ENCODE measurements at regions of chr2 and their contacts with region 1.

Region 1: GRCh38 chr2:20446917-20447436 is at the start of gene RHOB:
- DNase-seq: peak; percentile 74
- ATAC-seq: peak; percentile 98
- H3K4me3 ChIP-seq: peak within 1 kb of the TSS; percentile 60; the same call in 1 of the 2 replicates
- H3K27ac ChIP-seq: no peak within 1 kb of the TSS
- H3K4me1 ChIP-seq: peaks cover 3% of the 10 kb centered on the region
- H3K27me3 ChIP-seq: peaks cover 5 to 9% of the 10 kb centered on the region in 2 experiments; a peak in 3 of 4 replicates
- CTCF ChIP-seq: no peak
- EP300 ChIP-seq: no peak
- POLR2A ChIP-seq: peak; percentile 98
- RAD21 ChIP-seq: 0 out of 2 replicates have a peak, but pooled peaks have one; percentile 11
- polyA plus RNA-seq, gene RHOB: 0.03 to 0.35 TPM

Region 2: GRCh38 chr2:20424300-20425290 is 22.4 kb before region 1 on chr2:
- CTCF ChIA-PET with region 1: interaction called, 7 read pairs
- POLR2A ChIA-PET with region 1: interaction called, 4 read pairs
- RAD21 ChIA-PET with region 1: interaction called, 17 read pairs
- SMC1A ChIA-PET with region 1: interaction called, 5 read pairs
- in situ Hi-C with region 1: no loop called
- intact Hi-C with region 1: no loop called
- DNase-seq: peak; percentile 57
- ATAC-seq: peak; percentile 76
- H3K4me3 ChIP-seq: peak overlapping the region; percentile 17; the same call in 1 of the 2 replicates
- H3K27ac ChIP-seq: peak overlapping the region; percentile 68
- H3K4me1 ChIP-seq: peaks cover 34% of the 10 kb centered on the region
- H3K27me3 ChIP-seq: no peaks in the 10 kb centered on the region
- CTCF ChIP-seq: no peak
- EP300 ChIP-seq: no peak
- POLR2A ChIP-seq: 0 out of 2 replicates have a peak, but pooled peaks have one; percentile 32
- RAD21 ChIP-seq: no peak

Region 3: DNA sequence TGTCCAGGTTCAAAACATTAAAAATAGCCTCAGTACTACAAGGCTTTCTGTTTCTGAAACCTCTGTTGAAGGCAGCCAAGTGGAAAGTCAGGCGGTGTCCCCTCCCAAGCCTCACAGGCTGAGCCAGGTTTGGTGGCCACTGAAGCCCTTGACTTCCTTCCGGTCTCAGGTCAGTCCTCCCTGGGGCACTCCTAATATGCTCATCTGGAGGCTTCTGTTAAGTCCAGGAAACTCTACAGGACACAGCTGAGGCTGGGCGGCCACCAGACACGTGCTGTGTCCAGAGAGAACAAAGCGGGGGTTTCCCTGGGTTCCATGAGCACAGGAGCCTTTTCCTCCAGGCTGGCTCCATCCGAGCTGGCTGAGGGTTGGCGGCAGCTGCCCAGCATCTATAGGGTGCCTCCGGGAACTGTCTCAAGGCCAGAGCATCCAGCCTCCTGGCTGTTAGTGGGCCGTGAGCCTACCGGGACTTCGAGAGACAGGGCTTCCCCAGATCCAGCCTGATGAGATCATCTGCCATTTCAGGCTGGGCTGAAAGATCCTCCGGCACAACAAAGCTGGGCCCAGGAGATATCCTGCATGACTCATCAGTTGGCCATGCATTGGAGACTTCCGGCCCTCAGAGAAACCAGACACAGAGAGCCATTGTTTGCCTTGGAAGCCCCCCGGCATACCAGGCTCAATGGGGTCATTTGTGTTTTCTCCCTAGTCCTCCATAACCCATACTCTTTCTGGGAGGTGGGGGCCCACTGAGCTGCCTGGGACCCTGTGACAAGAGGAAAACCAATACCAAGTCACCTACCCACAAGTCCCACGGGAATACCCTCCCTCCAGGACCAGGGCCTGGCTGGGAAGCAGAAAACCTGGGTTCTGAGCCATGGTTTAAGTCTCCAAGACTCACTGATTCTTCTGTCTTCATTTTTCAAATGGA is 132.2 kb after region 1 on chr2:
- CTCF ChIA-PET with region 1: interaction called, 7 read pairs
- POLR2A ChIA-PET with region 1: interaction called, 6 read pairs
- RAD21 ChIA-PET with region 1: interaction called, 10 read pairs
- SMC1A ChIA-PET with region 1: interaction called, 4 read pairs
- in situ Hi-C with region 1: no loop called
- intact Hi-C with region 1: loop called (anchors 2 kb)
- DNase-seq: peak; percentile 74
- ATAC-seq: peak; percentile 86
- H3K4me3 ChIP-seq: peak overlapping the region; percentile 49; the same call in 1 of the 2 replicates
- H3K27ac ChIP-seq: peak overlapping the region; percentile 86
- H3K4me1 ChIP-seq: peaks cover 46% of the 10 kb centered on the region
- H3K27me3 ChIP-seq: no peaks in the 10 kb centered on the region
- CTCF ChIP-seq: no peak
- EP300 ChIP-seq: 0 out of 4 replicates have a peak, but pooled peaks of 1 of the 2 experiments have one; percentile 46
- POLR2A ChIP-seq: no peak
- RAD21 ChIP-seq: 0 out of 2 replicates have a peak, but pooled peaks have one; percentile 2

Region 4: GRCh38 chr2:20635675-20636584 is 189.0 kb after region 1 on chr2:
- CTCF ChIA-PET with region 1: interaction called, 119 read pairs
- POLR2A ChIA-PET with region 1: interaction called, 13 read pairs
- RAD21 ChIA-PET with region 1: interaction called, 107 read pairs
- SMC1A ChIA-PET with region 1: interaction called, 56 read pairs
- in situ Hi-C with region 1: loop called (anchors 5 kb)
- intact Hi-C with region 1: loop called (anchors 1 kb)
- DNase-seq: no peak
- ATAC-seq: peak; percentile 95
- H3K4me3 ChIP-seq: no peak overlapping the region
- H3K27ac ChIP-seq: no peak overlapping the region
- H3K4me1 ChIP-seq: peaks cover 17% of the 10 kb centered on the region
- H3K27me3 ChIP-seq: no peaks in the 10 kb centered on the region
- CTCF ChIP-seq: peak; percentile 81 to 93 (median 88)
- EP300 ChIP-seq: no peak
- POLR2A ChIP-seq: no peak
- RAD21 ChIP-seq: peak; percentile 98

Region 5: GRCh38 chr2:20661067-20661980 is 214.3 kb after region 1 on chr2:
- CTCF ChIA-PET with region 1: interaction called, 10 read pairs
- POLR2A ChIA-PET with region 1: no interaction called
- RAD21 ChIA-PET with region 1: no interaction called
- SMC1A ChIA-PET with region 1: no interaction called
- in situ Hi-C with region 1: no loop called
- intact Hi-C with region 1: no loop called
- DNase-seq: peak; percentile 46
- ATAC-seq: peak; percentile 79
- H3K4me3 ChIP-seq: no peak overlapping the region
- H3K27ac ChIP-seq: no peak overlapping the region
- H3K4me1 ChIP-seq: peaks cover 9% of the 10 kb centered on the region; the same call in 1 of the 2 replicates
- H3K27me3 ChIP-seq: peaks cover 6 to 16% of the 10 kb centered on the region in 2 experiments
- CTCF ChIP-seq: peak; percentile 95 to 97 (median 97); a peak in 5 of 6 replicates
- EP300 ChIP-seq: no peak
- POLR2A ChIP-seq: no peak
- RAD21 ChIP-seq: peak; percentile 99

Measured in GM12878 (cell line).